ENCODE measurements at regions of chr9 and their contacts with region 1.

Region 1: GRCh38 chr9:97615439-97616072 is 17.6 kb downstream of the TSTD2 start:
- DNase-seq: peak in 1 of 2 donors; percentile 64
- ATAC-seq: peak; percentile 64 to 79
- H3K4me3 ChIP-seq: no peak overlapping the region
- H3K27ac ChIP-seq: peak overlapping the region in 1 of 4 donors; percentile 39
- H3K4me1 ChIP-seq: peaks cover 0 to 8% of the 10 kb centered on the region in 2 donors
- H3K27me3 ChIP-seq: no peaks in the 10 kb centered on the region
- CTCF ChIP-seq: peak; percentile 83 to 87 (median 86)
- POLR2A ChIP-seq: no peak

Region 2: GRCh38 chr9:97284798-97285197 is 330.8 kb before region 1 on chr9:
- in situ Hi-C with region 1: no loop called
- intact Hi-C with region 1: no loop called
- DNase-seq: no peak
- ATAC-seq: no peak
- H3K4me3 ChIP-seq: no peak overlapping the region
- H3K27ac ChIP-seq: no peak overlapping the region
- H3K4me1 ChIP-seq: no peaks in the 10 kb centered on the region
- H3K27me3 ChIP-seq: no peaks in the 10 kb centered on the region
- CTCF ChIP-seq: no peak
- POLR2A ChIP-seq: no peak

Region 3: DNA sequence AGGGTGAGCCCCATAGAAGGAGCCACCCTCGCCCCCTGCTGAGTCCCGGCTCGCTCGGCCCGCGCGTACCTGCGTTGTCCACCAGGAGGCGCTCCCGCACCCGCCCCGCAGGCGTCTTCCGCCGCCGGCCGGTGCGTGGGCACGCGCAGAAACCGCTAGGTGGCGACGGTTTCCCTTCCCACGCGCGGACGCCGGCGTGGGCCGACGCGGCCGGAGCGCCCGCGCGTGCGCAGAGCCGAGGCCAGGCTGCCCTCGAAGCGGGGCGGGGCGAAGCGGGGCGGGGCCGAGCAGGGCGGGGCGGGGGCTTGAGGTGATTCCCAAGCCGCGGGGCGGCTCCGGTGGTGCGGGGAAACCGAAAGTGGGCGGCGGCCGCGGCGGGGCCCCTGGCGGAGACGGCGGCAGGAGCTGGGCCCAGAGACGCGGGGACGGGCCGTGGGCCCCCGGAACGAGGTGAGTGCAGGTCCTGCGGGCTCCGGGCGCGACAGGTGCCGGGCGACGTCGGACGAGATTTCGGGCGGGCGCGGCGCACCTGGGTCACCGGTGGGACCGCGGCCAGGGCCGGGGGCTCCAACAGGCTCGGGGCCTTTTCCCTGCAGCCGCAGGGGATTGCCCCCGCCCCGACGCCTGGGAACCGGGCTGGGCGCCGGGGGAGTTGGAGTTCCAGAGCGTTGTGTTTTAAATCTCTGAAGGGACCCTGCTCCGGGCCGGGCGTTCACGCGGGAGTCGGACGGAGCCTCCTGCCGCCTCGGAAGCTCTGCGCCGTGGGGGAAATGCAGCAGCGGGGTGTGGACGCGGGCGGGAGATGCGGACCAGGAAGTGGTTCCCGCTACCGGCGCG is 203.5 kb before region 1 on chr9 and contains the start of gene TDRD7:
- in situ Hi-C with region 1: loop called in 1 of 4 experiments (anchors 5 kb)
- intact Hi-C with region 1: loop called (anchors 5 kb)
- DNase-seq: peak; percentile 54 to 71
- ATAC-seq: peak; percentile 87 to 93
- H3K4me3 ChIP-seq: peak within 1 kb of the TSS; percentile 70 to 98 (median 94)
- H3K27ac ChIP-seq: peak within 1 kb of the TSS; percentile 63 to 86 (median 77)
- H3K4me1 ChIP-seq: peaks cover 3 to 12% of the 10 kb centered on the region in 2 donors
- H3K27me3 ChIP-seq: no peaks in the 10 kb centered on the region
- CTCF ChIP-seq: peak; percentile 89 to 98 (median 97)
- POLR2A ChIP-seq: peak in 1 of 2 donors; percentile 3
- total RNA-seq, gene TDRD7: 2.9 to 5.7 (median 3.5) TPM

Region 4: DNA sequence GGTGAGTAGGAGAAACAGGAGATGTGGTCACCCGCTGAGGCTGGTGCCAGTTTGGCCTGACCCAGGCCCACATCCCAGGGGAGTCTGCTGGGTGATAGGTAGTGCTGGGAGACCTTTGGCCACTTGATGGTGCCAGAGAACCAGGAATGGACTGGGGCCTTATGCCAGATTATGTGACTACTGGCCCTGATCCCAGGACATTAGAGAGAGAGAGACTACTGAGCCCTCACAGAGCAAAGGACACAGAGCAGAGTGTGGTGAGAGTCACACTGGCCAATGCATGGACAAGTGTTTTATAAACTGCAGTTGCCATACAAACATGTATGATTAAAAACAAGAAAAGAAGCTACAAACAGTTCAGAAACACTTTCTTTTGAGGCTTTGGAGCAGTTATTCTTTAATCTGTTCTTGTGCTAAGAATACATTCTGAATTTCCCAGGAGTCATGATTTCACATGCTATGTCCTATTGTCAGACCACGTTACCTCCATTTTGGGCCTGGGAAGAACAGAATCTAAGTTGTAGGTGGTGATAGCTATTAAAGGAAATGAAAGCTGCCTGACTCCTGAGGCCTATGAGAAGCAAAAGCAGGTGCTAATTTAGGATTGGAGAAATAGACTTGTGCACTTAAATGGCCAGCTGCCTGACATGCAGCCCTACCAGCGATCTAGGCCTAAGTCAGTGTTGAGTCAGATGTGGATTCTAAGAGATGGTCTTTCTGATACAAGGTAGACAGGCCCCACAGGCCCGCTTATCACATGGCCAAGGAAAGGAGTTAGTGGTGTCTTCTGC is 146.7 kb before region 1 on chr9:
- in situ Hi-C with region 1: loop called (anchors 5 kb)
- intact Hi-C with region 1: loop called (anchors 1 kb)
- DNase-seq: peak; percentile 76 to 89
- ATAC-seq: peak; percentile 99 to 100
- H3K4me3 ChIP-seq: no peak overlapping the region
- H3K27ac ChIP-seq: peak overlapping the region; percentile 75 to 84 (median 79)
- H3K4me1 ChIP-seq: peaks cover 7 to 17% of the 10 kb centered on the region in 2 donors
- H3K27me3 ChIP-seq: no peaks in the 10 kb centered on the region
- CTCF ChIP-seq: peak; percentile 88 to 93 (median 90)
- POLR2A ChIP-seq: no peak